ENCODE measurements at regions of chr1 and their contacts with region 1.

Region 1: DNA sequence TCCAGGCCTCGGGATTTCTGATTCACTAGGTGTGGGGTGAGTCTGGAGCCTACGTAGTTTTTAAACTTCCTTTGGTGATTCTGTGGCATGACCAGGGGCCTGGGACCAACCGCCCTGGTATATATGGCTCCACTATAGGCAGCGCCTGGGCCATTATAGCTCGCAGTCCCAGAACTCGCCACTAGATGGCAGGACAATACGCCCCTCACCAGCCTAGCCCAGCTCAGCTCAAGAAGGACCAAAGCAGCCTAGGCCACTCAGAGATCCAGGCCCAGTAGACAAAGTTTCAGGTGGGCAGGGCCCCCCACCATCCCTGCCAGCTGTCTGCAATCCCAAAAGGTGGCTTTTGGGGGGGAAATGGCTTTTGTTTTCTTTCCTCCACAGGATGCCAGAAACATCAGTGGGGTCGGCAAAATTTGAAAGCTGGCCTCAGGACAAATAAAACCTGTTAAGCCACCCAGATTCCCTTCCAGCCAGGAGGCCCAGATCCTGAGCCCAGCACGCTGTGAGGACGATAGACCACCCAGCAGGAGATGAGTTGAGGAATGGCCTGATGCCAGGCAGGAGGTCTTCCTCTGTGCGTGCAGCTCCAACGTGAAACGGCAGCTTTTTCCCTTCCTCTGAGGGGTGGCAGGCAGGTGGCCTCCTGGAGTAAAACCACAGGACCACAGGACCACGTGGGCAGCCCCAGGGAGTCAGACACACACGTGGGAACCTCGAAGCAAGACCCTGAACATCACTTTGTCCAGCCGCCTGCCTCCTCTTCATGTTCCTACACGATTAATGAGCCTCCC is 24.8 kb upstream of the TMEM51 start:
- DNase-seq: peak; percentile 79
- ATAC-seq: peak; percentile 92 to 100 (median 100)
- H3K4me3 ChIP-seq: no peak overlapping the region
- H3K4me3 Mint-ChIP-seq: no peak overlapping the region
- H3K27ac ChIP-seq: no peak overlapping the region
- H3K27ac Mint-ChIP-seq: no peak overlapping the region
- H3K4me1 ChIP-seq: no peaks in the 10 kb centered on the region
- H3K4me1 Mint-ChIP-seq: no peaks in the 10 kb centered on the region
- H3K27me3 ChIP-seq: no peaks in the 10 kb centered on the region
- H3K27me3 Mint-ChIP-seq: peaks cover 5 to 9% of the 10 kb centered on the region in 2 donors
- CTCF ChIP-seq: peak; percentile 90

Region 2: GRCh38 chr1:15272009-15272788 is 143.5 kb after region 1 on chr1:
- intact Hi-C with region 1: loop called (anchors 1 kb)
- DNase-seq: peak in 1 of 2 donors; percentile 62
- ATAC-seq: peak; percentile 80 to 100 (median 96)
- H3K4me3 ChIP-seq: no peak overlapping the region
- H3K4me3 Mint-ChIP-seq: no peak overlapping the region
- H3K27ac ChIP-seq: no peak overlapping the region
- H3K27ac Mint-ChIP-seq: no peak overlapping the region
- H3K4me1 ChIP-seq: peaks cover 4% of the 10 kb centered on the region
- H3K4me1 Mint-ChIP-seq: peaks cover 5% of the 10 kb centered on the region in 2 donors
- H3K27me3 ChIP-seq: no peaks in the 10 kb centered on the region
- H3K27me3 Mint-ChIP-seq: peaks cover 16 to 25% of the 10 kb centered on the region in 2 donors
- CTCF ChIP-seq: peak; percentile 72

Region 3: DNA sequence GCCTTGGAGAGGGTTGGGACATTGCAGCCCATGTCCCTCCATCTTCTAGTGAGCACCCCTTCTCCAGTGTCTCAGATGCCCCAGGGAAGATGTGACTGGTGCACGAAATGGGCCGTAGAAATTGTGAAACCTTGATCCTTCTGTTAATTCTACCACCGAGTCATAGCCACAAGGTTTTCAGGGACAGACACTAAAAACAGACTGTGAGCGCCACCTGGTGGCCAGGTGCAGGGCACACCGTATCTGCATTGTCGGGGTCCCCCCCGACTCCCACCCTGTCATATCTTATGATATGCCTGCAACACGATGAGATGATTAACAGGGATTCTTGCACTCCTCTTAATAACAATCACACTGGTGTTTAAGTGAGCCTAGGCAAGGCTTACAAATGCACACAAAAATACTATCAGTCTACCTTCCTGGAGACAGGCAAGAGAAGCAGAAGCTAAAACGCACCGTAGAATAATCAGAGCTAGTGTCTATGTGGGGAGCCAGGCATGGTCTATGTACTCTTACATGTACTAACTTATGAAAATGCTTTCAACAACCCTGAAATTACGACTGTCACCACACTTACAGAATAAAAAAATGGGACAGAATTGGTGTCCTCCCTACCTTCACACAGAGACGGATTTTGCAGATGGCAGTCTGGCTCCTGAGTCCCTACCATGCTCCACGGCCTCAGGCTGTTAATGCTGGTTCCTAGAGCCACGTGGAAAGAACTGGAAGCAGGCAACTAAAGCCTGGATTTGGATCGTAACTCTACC is 176.2 kb after region 1 on chr1:
- intact Hi-C with region 1: loop called (anchors 1 kb)
- DNase-seq: peak; percentile 56 to 78
- ATAC-seq: peak in 2 of 3 donors; percentile 63 to 68
- H3K4me3 ChIP-seq: no peak overlapping the region
- H3K4me3 Mint-ChIP-seq: no peak overlapping the region
- H3K27ac ChIP-seq: no peak overlapping the region
- H3K27ac Mint-ChIP-seq: no peak overlapping the region
- H3K4me1 ChIP-seq: peaks cover 3% of the 10 kb centered on the region
- H3K4me1 Mint-ChIP-seq: peaks cover 0 to 7% of the 10 kb centered on the region in 2 donors
- H3K27me3 ChIP-seq: no peaks in the 10 kb centered on the region
- H3K27me3 Mint-ChIP-seq: peaks cover 0 to 10% of the 10 kb centered on the region in 2 donors
- CTCF ChIP-seq: peak; percentile 98

Measured in natural killer cell (primary cell).